Activated naive CD4-positive, alpha-beta T cell treated with anti-CD3 and anti-CD28 coated beads for 36 hours (primary cell): ENCODE measurements at regions of chr9 and their contacts with region 1.

Region 1: DNA sequence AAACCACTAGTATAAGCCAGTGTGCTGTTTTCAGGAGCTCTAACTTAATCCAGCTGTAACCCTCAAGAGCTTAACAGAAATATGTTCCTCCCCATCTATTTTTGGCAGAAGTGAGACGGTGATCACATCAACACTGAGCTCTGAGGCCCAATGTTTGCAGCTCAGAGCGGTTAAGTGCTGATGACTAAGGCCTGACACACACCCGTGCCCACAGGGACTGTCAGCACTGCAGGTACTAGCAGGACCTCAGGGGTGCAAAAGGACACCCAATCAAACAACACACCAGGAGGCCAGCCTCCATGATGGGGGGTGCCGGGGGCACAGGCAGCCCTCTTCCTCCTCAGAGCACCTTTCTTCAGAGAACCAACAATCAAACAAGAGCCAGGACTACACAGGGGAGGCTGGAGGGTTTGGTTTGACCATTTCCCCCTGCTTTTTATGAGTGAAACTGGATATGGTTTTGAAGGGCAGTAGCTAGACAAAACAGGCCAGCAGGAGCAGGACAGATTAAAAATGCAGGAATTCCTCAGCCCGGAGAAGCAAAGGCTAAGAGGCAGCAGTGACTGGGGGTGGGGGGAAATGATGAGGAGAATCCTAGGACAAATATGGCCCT is 61.3 kb downstream of the RAPGEF1 start:
- DNase-seq: peak; percentile 92
- H3K4me3 Mint-ChIP-seq: peak overlapping the region; percentile 55
- H3K27ac Mint-ChIP-seq: peak overlapping the region; percentile 93
- H3K4me1 Mint-ChIP-seq: peaks cover 67% of the 10 kb centered on the region
- H3K27me3 Mint-ChIP-seq: no peaks in the 10 kb centered on the region

Region 2: GRCh38 chr9:131651618-131652017 is 27.0 kb before region 1 on chr9:
- CTCF ChIA-PET with region 1: interaction called, 4 read pairs
- intact Hi-C with region 1: loop called (anchors 1 kb)
- DNase-seq: peak; percentile 32
- H3K4me3 Mint-ChIP-seq: no peak overlapping the region
- H3K27ac Mint-ChIP-seq: peak overlapping the region; percentile 68
- H3K4me1 Mint-ChIP-seq: peaks cover 48% of the 10 kb centered on the region
- H3K27me3 Mint-ChIP-seq: no peaks in the 10 kb centered on the region